ENCODE measurements at regions of chr4 and their contacts with region 1.

Region 1: GRCh38 chr4:39068907-39069306 is 6.9 kb downstream of the KLHL5 start:
- DNase-seq: no peak

Region 2: DNA sequence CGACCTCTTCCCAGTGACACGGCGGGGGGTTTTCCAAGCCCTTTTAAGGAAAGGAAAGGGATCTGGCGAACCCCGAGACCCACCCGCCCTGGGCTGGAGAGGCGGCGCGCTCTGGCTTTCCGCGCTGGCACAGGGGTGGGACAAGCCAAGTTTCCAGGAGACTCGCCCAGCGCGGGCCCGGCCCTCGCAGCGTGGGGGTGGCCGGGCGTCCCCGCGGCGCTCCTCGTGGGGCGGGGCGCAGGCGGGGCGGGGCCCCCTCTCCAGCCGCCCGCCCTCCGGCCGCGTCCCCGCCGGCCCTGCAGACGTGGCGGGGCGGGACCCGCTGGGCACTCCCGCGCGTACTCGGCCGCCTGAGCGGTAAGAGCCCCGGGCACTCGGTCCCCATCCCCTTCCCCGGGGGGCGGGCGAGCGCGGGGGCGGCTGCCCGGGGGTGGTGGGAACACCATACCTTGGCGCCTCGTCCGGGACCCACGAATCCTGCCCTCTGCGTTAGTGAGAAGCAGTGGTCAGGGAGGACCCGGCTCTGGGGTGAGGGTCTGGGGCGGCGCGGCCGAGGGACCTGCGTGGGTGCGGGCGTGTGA is 201.3 kb before region 1 on chr4 and contains the start of gene FAM114A1:
- intact Hi-C with region 1: no loop called
- DNase-seq: peak; percentile 95
- total RNA-seq, gene FAM114A1: 90.2 to 111 TPM

Region 3: DNA sequence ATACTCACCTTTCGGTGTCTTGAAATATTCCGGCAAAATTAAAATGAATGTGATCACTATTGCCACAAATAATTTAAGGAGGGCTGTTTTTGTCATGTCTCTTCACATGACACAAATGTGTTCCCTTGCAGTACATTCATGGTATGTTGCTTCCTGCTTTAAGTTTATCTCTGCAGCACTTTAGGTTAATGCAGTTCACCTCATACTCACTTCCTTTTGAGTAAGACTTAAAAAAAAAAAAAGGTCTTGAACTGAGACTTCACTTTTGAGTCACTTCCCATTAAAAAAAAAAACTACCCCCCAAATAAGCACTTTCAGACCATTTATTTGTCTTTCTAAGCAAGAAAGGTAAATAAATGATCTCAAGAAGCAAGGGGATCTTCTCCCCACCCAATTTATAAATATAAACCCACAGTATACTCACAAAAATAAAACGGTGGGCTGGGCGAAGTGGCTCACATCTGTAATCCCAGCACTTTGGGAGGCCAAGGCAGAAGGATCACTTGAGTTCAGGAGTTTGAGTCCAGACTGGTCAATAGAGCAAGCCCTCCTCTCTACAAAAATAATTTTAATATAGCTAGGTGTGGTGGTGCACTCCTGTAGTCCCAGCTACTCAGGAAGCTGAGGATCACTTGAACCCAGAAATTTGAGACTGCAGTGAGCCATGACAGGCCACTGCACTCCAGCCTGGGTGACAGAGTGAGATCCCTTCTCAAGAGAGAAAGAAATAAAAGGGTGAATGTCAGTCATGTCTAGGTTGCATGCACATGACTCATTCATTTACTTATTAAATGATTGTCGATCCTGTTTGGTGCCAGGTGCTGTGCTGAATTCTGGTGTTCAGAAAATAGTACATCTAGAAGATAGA is 36.5 kb before region 1 on chr4 and contains the start of gene TMEM156:
- intact Hi-C with region 1: no loop called
- DNase-seq: no peak
- total RNA-seq, gene TMEM156: 0.29 to 0.65 TPM

Region 4: GRCh38 chr4:39083164-39083563 is 14.3 kb after region 1 on chr4:
- intact Hi-C with region 1: loop called in 1 of 2 experiments (anchors 2 kb)
- DNase-seq: no peak

Region 5: DNA sequence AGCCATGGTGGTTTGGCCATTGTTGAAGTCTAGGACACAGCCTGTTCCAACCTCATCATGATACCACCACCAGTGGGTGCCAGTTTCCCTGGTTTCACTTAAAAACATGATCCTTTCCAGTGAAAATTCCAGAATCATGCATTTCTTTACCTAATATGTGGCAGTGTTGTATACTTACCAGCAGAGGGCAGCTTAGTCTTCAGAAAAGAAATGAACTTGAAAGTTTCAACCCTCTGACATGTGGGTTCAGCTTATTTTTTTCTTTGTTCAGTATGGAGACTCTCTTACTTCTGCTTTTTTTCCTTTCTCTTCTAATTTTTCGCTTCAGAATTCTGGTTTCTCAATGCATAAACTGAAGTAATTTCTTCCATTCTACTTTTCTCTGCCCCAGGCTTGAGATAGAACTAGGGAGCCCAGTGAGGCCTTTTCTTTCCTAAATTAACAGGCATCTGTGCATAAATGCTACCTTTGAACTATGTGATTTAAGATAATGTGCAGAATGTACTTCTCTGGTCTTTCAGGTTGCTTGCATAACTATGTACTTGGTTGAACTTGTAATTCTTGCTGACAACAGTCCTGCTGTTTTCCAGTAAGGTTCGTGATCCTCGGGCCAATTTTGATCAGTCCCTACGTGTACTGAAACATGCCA is 400.6 kb after region 1 on chr4:
- intact Hi-C with region 1: no loop called
- DNase-seq: no peak

Measured in posterior vena cava (tissue), 2 donors.